ENCODE measurements at regions of chr6 and their contacts with region 1.

Region 1: DNA sequence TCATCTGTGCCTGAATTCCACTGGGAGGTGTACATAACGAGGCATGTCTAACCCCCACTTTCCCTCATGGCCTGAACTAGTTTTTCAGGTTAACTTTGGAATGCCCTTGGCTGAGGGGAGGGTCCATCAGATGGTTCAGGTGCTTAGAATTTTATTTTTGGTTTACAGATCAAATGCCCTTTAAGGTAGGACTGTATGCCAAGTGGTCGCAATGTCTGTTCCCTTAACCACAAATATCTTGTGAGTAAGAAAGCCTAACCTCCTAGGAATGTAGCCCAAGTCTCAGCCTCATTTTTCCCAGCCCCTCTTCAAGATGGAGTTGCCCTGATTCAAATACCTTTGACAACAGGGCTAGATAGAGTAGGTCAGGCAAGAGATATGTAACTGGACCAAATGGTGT is 78.4 kb downstream of the RNASET2 start:
- DNase-seq: peak; percentile 27 to 77
- H3K4me3 ChIP-seq: no peak overlapping the region
- H3K27ac ChIP-seq: 0 out of 2 replicates have a peak overlapping the region, but pooled peaks have one; percentile 32
- H3K4me1 ChIP-seq: peaks cover 16% of the 10 kb centered on the region
- H3K27me3 ChIP-seq: no peaks in the 10 kb centered on the region
- CTCF ChIP-seq: no peak

Region 2: GRCh38 chr6:166921570-166921969 is 43.7 kb after region 1 on chr6:
- CTCF ChIA-PET with region 1: interaction called, 15 read pairs
- POLR2A ChIA-PET with region 1: no interaction called
- intact Hi-C with region 1: no loop called
- DNase-seq: no peak
- H3K4me3 ChIP-seq: no peak overlapping the region
- H3K27ac ChIP-seq: no peak overlapping the region
- H3K4me1 ChIP-seq: no peaks in the 10 kb centered on the region
- H3K27me3 ChIP-seq: no peaks in the 10 kb centered on the region
- CTCF ChIP-seq: no peak